ENCODE measurements at regions of chr5 and their contacts with region 1.

Region 1: GRCh38 chr5:78359831-78360673 is at the start of gene SCAMP1:
- DNase-seq: peak; percentile 87 to 93
- ATAC-seq: peak; percentile 94
- total RNA-seq, gene SCAMP1: 33.2 to 38.5 TPM

Region 2: DNA sequence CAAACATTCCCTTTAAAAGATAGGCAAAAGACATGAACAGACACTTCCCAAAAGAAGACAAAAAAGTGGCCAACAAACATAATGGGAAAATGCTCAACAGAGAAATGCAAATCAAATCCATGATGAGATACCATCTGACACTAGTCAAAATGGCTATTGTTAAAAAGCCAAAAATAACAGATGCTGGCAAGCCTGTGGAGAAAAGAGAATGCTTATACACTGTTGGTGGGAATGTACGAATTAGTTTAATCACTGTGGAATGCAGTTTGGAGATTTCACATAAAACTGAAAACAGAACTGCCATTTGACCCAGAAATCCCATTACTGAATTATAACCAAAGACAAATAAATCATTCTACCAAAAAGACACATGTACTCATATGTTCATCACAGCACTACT is 809.6 kb before region 1 on chr5:
- intact Hi-C with region 1: no loop called
- DNase-seq: no peak
- ATAC-seq: no peak

Region 3: DNA sequence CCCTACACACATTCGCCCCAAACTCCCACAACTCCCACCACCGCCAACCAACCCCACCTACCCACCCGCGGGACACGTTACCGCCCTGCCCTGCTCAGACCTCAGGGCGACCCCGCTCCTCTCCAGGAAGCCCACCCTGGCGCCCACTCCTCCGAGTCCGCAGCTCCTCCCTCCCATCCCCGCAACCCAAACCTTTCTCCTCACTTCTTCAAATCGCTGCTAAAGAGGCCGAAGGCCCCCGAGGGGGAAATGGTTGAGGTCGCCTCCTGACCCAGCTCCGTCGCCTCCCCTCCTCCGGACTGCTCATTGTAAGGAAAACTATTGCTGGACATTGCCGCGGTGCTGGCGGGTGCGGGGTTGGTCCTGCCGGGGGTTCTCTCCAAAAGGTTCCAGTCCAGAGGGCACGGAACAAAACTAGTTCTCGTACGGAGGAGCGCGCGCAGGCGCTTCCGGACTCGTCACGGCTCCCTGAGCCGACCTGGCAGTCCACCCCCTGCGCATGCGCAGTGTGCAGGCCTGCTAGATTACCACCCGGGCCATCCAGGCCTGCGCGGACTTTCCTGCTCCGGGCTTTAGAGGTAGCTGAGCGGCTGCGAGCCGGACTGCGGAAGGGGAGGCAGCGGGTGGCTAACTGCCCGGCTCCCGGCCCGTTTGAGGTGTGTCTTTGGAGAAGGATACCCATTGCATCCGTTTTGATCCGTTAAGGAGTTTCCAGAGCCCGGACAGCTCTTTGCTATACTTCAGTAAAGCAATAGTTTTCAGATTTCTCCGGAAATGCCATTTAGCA is 65.6 kb before region 1 on chr5 and contains the start of gene AP3B1:
- intact Hi-C with region 1: loop called in 1 of 2 experiments (anchors 5 kb)
- DNase-seq: peak; percentile 99
- ATAC-seq: peak; percentile 94
- total RNA-seq, gene AP3B1: 51.3 to 55.6 TPM